ENCODE measurements at regions of chr2 and their contacts with region 1.

Region 1: DNA sequence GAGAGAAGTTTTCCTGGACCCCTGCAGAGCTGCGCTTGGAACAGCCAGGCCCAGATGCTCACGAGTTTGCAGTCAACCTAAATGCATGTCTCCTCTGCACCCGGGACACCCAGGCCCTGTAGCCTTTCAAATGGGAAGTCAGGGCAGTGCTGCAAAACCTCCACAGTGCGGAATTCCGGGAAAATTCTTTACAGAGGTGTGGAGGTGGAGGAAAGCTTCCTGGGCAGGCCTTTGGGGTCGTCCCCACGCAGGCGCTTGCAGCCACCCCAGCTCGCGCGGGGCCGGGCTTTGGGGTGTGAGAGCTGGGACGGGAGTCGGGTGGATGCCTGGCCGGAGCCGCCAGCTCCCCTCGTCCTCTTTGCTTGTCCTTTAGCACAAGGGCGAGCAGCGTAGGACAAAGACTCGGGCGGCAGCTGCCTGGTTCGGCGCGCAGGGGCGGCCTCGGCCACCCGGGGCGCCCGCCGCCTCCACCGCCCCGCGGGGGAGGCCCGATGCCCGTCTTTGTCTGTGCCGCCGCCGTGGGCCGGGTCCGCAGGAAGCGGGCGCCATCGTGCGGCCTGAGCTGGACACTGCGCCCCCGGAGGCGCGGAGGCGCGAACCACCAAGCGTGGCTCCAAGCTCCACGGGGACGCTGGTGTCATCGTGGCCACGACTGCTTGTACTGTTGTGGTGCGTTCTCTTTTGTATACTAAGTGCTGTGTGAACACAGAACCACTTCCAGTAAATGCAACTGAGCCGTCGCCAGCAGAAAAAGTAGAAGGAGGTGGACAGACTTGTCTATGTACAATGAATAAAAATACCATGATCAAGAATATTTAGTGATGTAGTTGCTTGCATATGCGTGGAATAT is 28.2 kb upstream of the BCL11A start:
- DNase-seq: peak; percentile 95
- H3K4me3 ChIP-seq: peak overlapping the region; percentile 37 to 53; a peak in 3 of 4 replicates
- H3K27ac ChIP-seq: no peak overlapping the region
- H3K4me1 ChIP-seq: no peaks in the 10 kb centered on the region; a peak in 1 of 4 replicates
- H3K27me3 ChIP-seq: no peaks in the 10 kb centered on the region; the same call in 1 of the 2 replicates
- CTCF ChIP-seq: peak; percentile 86
- EP300 ChIP-seq: no peak
- RAD21 ChIP-seq: peak; percentile 83

Region 2: DNA sequence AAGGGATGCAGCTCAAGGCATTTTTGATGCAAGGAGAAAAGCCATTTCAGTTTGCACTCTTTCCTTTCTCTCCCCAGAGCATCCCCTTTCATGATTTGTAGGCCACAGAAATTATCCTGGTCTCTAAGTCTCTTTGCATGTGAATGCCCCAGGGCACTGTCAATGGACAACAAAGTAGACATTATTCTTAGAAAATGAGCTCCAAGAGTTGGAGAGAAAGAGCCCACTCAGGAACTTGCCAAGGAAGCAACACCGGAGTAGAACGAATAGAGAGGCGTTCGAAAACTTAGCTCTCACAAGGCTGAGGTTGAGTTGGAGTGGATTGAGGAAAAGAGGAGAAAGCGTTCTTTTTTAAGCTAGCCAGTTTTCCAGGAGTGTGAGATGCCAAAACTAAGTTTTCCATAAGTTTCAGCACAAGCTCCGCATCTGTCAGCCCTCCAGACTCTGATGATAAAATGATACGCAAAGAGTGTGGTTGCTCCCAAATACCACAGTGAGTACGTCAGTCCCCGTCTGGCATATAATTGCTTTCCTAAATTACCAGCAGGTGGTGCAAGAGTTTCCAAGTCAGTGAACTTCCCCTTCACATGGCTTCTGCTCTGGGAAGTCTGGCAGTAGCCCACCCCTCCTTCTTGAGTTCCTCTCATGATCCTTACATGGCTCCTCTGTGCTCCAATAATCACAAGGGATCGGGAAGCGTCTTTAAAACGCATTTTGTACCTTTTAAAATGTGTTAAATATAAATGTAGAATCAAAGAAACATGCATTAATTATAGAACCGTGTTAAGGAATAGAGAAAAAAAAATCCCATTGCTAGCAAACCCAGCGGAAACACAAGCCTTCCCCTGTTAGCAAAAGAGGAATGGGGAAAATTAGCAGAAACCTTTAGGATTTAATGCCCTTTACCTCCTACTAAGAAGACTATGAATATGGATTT is 1279.9 kb before region 1 on chr2:
- CTCF ChIA-PET with region 1: interaction called, 10 read pairs
- POLR2A ChIA-PET with region 1: no interaction called
- DNase-seq: peak; percentile 27
- H3K4me3 ChIP-seq: peak overlapping the region in 1 of 2 experiments; percentile 23; a peak in 1 of 4 replicates
- H3K27ac ChIP-seq: no peak overlapping the region
- H3K4me1 ChIP-seq: no peaks in the 10 kb centered on the region; a peak in 1 of 4 replicates
- H3K27me3 ChIP-seq: no peaks in the 10 kb centered on the region
- CTCF ChIP-seq: peak; percentile 59
- EP300 ChIP-seq: no peak
- RAD21 ChIP-seq: peak; percentile 61

Region 3: DNA sequence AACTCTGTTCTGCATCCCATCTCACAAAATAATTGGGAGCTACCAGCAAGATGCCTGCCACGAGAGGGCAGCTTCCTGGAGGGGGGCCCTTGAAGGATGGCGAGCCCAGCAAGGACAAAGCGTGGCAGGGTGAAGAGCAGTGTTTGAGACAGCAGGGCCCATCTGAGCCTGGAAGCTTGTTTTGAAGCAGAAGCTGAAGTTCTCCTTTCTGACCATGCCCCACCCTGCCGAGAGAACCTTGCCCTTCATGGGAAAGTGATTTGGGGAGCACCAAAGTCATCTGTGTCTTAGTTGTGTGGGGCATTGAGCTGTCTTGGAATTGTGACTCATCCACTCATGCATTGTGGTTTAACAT is 244.5 kb before region 1 on chr2:
- CTCF ChIA-PET with region 1: no interaction called
- POLR2A ChIA-PET with region 1: no interaction called
- DNase-seq: no peak
- H3K4me3 ChIP-seq: no peak overlapping the region
- H3K27ac ChIP-seq: no peak overlapping the region
- H3K4me1 ChIP-seq: no peaks in the 10 kb centered on the region
- H3K27me3 ChIP-seq: no peaks in the 10 kb centered on the region
- CTCF ChIP-seq: peak; percentile 31
- EP300 ChIP-seq: no peak
- RAD21 ChIP-seq: no peak

Region 4: DNA sequence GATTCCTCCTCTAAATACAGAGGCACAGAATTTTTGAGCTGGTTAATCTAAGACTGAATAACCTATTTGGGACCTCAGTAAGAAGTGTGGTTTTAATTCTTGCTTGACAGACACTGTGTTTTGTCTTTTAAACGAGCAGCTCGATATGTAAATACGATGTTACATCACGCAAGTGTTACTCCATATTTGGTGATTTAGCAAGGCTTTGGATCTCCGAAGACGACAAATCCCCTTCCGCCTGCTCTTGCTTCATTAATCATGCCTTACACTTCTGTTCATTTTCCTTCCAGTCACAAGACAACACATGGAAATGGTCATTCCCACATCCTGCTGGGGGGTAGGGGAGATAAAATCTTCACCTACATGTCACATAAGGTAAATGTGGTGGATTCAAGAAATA is 37.6 kb before region 1 on chr2:
- CTCF ChIA-PET with region 1: interaction called, 20 read pairs
- POLR2A ChIA-PET with region 1: no interaction called
- DNase-seq: no peak
- H3K4me3 ChIP-seq: no peak overlapping the region
- H3K27ac ChIP-seq: no peak overlapping the region
- H3K4me1 ChIP-seq: no peaks in the 10 kb centered on the region
- H3K27me3 ChIP-seq: no peaks in the 10 kb centered on the region
- CTCF ChIP-seq: no peak
- EP300 ChIP-seq: no peak
- RAD21 ChIP-seq: no peak

Region 5: DNA sequence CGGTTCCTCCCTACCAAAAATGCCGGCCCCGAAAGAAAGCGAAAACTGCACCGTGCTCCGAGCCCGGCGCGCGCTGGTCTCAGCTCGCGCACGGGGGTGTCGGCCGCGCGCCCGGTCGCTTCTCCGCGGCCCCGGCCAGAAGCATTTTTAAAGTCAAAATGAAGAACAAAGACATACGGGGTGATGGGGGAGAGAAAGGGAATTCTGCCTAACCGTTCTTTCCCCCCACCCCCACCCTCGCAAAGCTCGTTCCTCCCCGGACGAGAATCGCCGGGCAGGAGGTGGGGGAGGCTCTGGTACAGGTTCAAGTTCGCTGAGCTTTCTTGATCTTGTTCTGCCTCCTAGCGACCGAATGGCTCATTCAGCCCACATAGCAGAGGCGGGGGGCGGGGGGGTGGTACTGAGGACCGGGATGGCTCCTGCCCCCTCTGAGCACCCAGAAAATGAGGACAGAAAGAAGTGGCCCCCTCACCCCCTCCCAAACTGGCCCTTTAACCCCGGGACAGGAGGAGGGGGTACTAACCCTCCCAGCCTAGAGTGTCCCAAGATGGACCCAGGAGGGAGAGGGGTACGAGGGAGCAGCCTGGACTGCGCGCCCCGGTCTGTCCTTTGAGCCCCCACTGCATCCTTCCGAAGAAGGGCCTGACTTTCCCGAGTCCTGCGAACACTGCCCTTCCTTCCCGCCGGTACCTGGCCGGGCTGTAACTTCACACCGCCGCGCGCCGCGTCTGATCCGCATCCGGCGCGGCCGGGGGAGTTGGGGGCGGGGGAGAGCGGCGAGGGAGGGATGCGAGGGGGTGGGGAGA is 31.3 kb before region 1 on chr2:
- CTCF ChIA-PET with region 1: interaction called, 324 read pairs
- POLR2A ChIA-PET with region 1: no interaction called
- DNase-seq: peak; percentile 84
- H3K4me3 ChIP-seq: peak overlapping the region; percentile 75 to 98
- H3K27ac ChIP-seq: peak overlapping the region in 1 of 2 experiments; percentile 69; a peak in 2 of 4 replicates
- H3K4me1 ChIP-seq: peaks cover 0 to 35% of the 10 kb centered on the region in 2 experiments; a peak in 1 of 4 replicates
- H3K27me3 ChIP-seq: no peaks in the 10 kb centered on the region
- CTCF ChIP-seq: peak; percentile 93
- EP300 ChIP-seq: peak in 1 of 2 experiments; percentile 38; a peak in 1 of 4 replicates
- RAD21 ChIP-seq: peak; percentile 80

Region 6: GRCh38 chr2:60597346-60597745 is 15.7 kb after region 1 on chr2:
- CTCF ChIA-PET with region 1: interaction called, 11 read pairs
- POLR2A ChIA-PET with region 1: no interaction called
- DNase-seq: no peak
- H3K4me3 ChIP-seq: no peak overlapping the region
- H3K27ac ChIP-seq: no peak overlapping the region
- H3K4me1 ChIP-seq: no peaks in the 10 kb centered on the region
- H3K27me3 ChIP-seq: no peaks in the 10 kb centered on the region
- CTCF ChIP-seq: no peak
- EP300 ChIP-seq: no peak
- RAD21 ChIP-seq: no peak

Region 7: DNA sequence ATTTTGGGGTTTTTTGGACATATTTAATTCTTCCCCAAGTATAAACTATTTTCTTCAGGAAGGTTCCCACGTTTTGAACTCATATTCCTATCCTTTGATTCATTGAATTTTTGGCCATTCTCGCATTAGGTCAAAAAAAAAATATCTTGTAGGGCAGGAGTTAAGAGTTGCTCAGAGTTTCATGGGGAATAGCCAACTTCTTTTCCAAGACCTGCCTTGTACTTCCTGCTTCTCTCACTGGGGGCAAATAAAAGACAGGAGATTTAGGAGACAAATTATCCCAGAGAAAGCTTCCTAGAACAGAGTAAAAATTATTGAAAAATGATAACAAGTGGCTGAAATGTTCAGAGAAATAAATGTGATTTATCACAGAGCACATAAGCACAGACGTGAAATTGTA is 27.0 kb after region 1 on chr2:
- CTCF ChIA-PET with region 1: interaction called, 22 read pairs
- POLR2A ChIA-PET with region 1: no interaction called
- DNase-seq: no peak
- H3K4me3 ChIP-seq: no peak overlapping the region
- H3K27ac ChIP-seq: no peak overlapping the region
- H3K4me1 ChIP-seq: no peaks in the 10 kb centered on the region
- H3K27me3 ChIP-seq: no peaks in the 10 kb centered on the region; the same call in 1 of the 2 replicates
- CTCF ChIP-seq: no peak
- EP300 ChIP-seq: no peak
- RAD21 ChIP-seq: no peak

Region 8: DNA sequence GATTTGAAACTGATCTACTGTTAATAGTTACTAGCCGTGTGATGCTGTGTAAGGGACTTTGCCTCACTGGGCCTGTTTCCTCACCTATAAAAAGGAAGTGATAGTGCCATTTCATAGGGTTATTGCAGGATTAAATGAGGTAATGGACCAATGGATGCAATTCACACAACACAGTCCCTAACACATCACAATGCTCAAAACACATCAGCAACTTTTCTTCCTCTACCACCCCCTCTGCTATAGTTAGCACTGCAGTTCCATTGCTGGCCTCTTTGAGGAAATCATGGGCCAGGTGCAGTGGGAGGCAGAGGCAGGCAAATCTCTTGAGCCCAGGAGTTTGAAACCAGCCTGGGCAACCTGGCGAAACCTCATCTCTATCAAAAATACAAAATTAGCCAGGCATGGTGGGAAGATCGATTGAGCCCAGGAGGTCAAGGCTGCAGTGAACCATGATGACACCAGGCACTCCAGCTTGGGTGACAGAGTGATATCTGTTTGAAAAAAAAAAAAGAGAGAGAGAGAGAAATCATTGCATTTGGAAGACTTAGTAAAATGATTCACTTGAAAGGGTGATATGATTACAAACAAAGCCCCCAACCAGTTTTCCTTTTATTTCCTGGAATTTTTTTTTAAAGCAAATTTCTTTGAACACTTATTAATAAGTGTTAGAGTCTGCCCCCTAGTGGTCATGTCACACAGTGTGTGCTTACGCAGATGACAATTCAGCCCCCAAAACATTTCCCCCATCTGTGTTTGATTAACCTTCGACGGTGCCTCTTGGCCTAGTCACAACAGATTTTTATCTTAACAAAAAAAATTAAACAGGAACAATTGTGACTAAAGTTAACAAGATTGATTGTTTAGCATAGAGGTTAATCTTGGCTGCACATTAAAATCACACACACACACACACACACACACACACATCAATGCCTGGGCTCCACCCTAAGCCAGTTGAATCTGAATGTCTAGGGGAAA is 60.4 kb after region 1 on chr2:
- CTCF ChIA-PET with region 1: interaction called, 11 read pairs
- POLR2A ChIA-PET with region 1: no interaction called
- DNase-seq: peak; percentile 59
- H3K4me3 ChIP-seq: peak overlapping the region in 1 of 2 experiments; percentile 48; a peak in 1 of 4 replicates
- H3K27ac ChIP-seq: no peak overlapping the region
- H3K4me1 ChIP-seq: peaks cover 0 to 9% of the 10 kb centered on the region in 2 experiments; a peak in 2 of 4 replicates
- H3K27me3 ChIP-seq: no peaks in the 10 kb centered on the region; the same call in 1 of the 2 replicates
- CTCF ChIP-seq: peak; percentile 92
- EP300 ChIP-seq: peak in 1 of 2 experiments; percentile 57; a peak in 1 of 4 replicates
- RAD21 ChIP-seq: peak; percentile 44